ENCODE measurements at regions of chr6 and their contacts with region 1.

Region 1: DNA sequence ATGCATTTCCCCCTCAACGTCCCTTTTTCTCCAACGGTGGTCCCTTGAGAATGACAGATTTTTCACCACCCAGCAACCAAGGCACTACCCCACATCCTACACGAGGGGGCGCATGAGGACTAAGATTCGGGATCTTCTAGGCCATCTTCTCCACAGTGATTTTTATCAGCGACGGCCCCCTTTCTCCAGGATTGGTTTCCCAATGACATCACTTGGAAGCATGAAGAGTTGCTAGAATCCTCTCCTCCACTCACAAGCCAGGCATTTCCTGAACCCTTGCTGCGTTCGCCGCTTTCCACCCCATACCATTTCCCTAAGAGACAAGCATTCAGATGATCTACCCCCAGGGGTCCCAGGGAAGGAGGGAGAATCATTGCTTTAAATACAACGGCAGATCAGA is 252.0 kb downstream of the HIVEP2 start:
- DNase-seq: peak; percentile 54 to 82 (median 65)
- H3K4me3 ChIP-seq: no peak overlapping the region
- H3K27ac ChIP-seq: no peak overlapping the region
- H3K4me1 ChIP-seq: no peaks in the 10 kb centered on the region
- H3K27me3 ChIP-seq: no peaks in the 10 kb centered on the region
- CTCF ChIP-seq: peak; percentile 85 to 97 (median 94)
- POLR2A ChIP-seq: no peak

Region 2: GRCh38 chr6:142177201-142177600 is 515.7 kb before region 1 on chr6:
- intact Hi-C with region 1: no loop called
- DNase-seq: no peak
- H3K4me3 ChIP-seq: no peak overlapping the region
- H3K27ac ChIP-seq: no peak overlapping the region
- H3K4me1 ChIP-seq: no peaks in the 10 kb centered on the region
- H3K27me3 ChIP-seq: no peaks in the 10 kb centered on the region
- CTCF ChIP-seq: no peak
- POLR2A ChIP-seq: no peak

Region 3: GRCh38 chr6:142455957-142456589 is 236.9 kb before region 1 on chr6:
- intact Hi-C with region 1: no loop called
- DNase-seq: no peak
- H3K4me3 ChIP-seq: no peak overlapping the region
- H3K27ac ChIP-seq: no peak overlapping the region
- H3K4me1 ChIP-seq: no peaks in the 10 kb centered on the region
- H3K27me3 ChIP-seq: no peaks in the 10 kb centered on the region
- CTCF ChIP-seq: no peak
- POLR2A ChIP-seq: no peak

Region 4: GRCh38 chr6:142946181-142946923 is 253.4 kb after region 1 on chr6:
- intact Hi-C with region 1: loop called in 1 of 2 experiments (anchors 10 kb)
- DNase-seq: peak; percentile 97 to 100 (median 98)
- H3K4me3 ChIP-seq: peak overlapping the region; percentile 36 to 94 (median 80)
- H3K27ac ChIP-seq: peak overlapping the region; percentile 99 to 100 (median 99)
- H3K4me1 ChIP-seq: peaks cover 10 to 22% of the 10 kb centered on the region in 2 donors
- H3K27me3 ChIP-seq: no peaks in the 10 kb centered on the region
- CTCF ChIP-seq: no peak
- POLR2A ChIP-seq: peak; percentile 88 to 98

Region 5: DNA sequence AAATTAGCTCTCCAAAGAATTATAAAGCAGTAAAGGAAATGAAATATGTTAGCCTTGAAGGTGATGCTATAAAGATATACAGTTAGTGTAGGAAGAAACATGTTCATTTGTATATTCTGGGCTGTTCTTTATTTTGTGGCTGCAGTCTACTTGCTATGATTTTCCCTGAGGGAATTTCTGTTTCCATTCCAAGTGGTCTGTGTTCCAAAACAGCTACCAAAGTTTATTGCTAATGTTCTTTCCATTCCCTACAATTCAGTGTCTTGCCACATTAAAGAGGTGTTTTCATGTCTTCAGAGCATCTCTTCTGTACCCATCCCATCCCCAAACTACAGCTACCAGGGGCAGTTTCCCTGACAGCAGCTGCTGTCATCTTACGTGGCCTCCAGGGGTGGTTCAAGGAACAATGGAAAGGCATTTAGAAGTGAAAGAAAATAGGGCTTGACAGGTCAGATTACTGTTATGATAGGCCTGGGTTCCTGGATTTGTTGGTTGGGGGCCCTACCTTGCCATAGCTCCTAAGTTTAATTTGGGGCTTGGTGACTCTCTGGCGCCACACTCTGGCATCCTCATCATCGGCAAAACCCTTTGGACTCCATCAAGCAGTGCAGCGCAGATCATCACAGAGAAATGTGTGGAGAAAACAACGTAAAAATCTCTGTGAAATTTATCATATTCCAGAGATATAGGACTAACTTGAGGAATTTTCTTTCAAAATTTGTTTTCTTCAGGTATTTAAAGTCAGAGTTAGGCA is 333.9 kb after region 1 on chr6:
- intact Hi-C with region 1: loop called (anchors 5 kb)
- DNase-seq: peak; percentile 29 to 75 (median 53)
- H3K4me3 ChIP-seq: no peak overlapping the region
- H3K27ac ChIP-seq: no peak overlapping the region
- H3K4me1 ChIP-seq: no peaks in the 10 kb centered on the region
- H3K27me3 ChIP-seq: no peaks in the 10 kb centered on the region
- CTCF ChIP-seq: peak; percentile 46 to 75 (median 67)
- POLR2A ChIP-seq: no peak

Region 6: GRCh38 chr6:143125864-143126573 is 433.1 kb after region 1 on chr6:
- intact Hi-C with region 1: no loop called
- DNase-seq: no peak
- H3K4me3 ChIP-seq: no peak overlapping the region
- H3K27ac ChIP-seq: no peak overlapping the region
- H3K4me1 ChIP-seq: no peaks in the 10 kb centered on the region
- H3K27me3 ChIP-seq: no peaks in the 10 kb centered on the region
- CTCF ChIP-seq: no peak
- POLR2A ChIP-seq: no peak

Region 7: DNA sequence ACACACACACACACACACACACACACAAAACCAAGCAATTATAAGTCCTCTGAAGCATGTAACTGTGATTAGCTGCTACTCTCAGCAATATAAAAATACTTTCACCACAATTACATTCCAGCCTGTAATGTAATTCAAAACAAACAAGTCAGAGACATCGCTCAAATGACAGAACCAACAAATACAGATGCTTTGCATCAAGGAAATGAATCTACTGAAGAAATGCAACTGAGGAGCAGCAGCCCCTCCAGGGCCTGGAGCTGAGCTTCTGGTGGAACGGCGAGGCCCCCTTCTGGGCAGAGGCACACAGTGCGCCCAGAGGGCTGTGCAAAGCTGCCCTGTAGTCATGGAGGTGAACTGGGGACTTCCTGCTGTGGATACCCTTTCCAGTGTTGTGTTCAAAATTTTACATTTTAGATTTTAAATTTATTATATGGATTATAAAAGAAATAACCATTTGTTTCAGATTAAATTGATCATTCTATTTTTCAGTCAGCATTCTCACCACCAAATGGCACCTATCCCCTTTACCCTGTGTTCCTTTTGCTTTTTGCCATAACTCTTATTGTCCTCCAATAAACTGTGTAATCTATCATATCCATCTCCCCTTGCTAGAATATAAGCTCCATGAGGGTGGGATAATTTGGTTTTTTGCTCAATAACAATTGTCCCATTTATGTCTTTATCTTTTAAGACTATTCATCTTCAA is 734.3 kb after region 1 on chr6:
- intact Hi-C with region 1: loop called (anchors 5 to 10 kb)
- DNase-seq: peak; percentile 49 to 80 (median 72)
- H3K4me3 ChIP-seq: no peak overlapping the region
- H3K27ac ChIP-seq: no peak overlapping the region
- H3K4me1 ChIP-seq: no peaks in the 10 kb centered on the region
- H3K27me3 ChIP-seq: no peaks in the 10 kb centered on the region
- CTCF ChIP-seq: peak; percentile 75 to 92 (median 89)
- POLR2A ChIP-seq: no peak

Measured in adrenal gland (tissue), 19 donors.